ENCODE measurements at regions of chr11 and their contacts with region 1.

Region 1: GRCh38 chr11:8964324-8965320 is at the start of gene TMEM9B:
- DNase-seq: peak; percentile 88
- H3K4me3 ChIP-seq: peak within 1 kb of the TSS; percentile 88
- H3K27ac ChIP-seq: peak within 1 kb of the TSS; percentile 60
- H3K4me1 ChIP-seq: peaks cover 20% of the 10 kb centered on the region
- CTCF ChIP-seq: no peak
- total RNA-seq, gene TMEM9B: 8.5 and 13.4 TPM in 2 replicates

Region 2: GRCh38 chr11:7846003-7846402 is 1118.6 kb before region 1 on chr11:
- CTCF ChIA-PET with region 1: no interaction called
- POLR2A ChIA-PET with region 1: no interaction called
- intact Hi-C with region 1: no loop called
- DNase-seq: no peak
- H3K4me3 ChIP-seq: no peak overlapping the region
- H3K27ac ChIP-seq: no peak overlapping the region
- H3K4me1 ChIP-seq: peaks cover 17% of the 10 kb centered on the region
- CTCF ChIP-seq: no peak

Region 3: GRCh38 chr11:8688414-8689362 is 275.9 kb before region 1 on chr11:
- CTCF ChIA-PET with region 1: no interaction called
- POLR2A ChIA-PET with region 1: interaction called, 4 read pairs
- intact Hi-C with region 1: loop called (anchors 2 kb)
- DNase-seq: peak; percentile 98
- H3K4me3 ChIP-seq: peak overlapping the region; percentile 88
- H3K27ac ChIP-seq: peak overlapping the region; percentile 93
- H3K4me1 ChIP-seq: peaks cover 53% of the 10 kb centered on the region
- CTCF ChIP-seq: peak; percentile 42

Region 4: DNA sequence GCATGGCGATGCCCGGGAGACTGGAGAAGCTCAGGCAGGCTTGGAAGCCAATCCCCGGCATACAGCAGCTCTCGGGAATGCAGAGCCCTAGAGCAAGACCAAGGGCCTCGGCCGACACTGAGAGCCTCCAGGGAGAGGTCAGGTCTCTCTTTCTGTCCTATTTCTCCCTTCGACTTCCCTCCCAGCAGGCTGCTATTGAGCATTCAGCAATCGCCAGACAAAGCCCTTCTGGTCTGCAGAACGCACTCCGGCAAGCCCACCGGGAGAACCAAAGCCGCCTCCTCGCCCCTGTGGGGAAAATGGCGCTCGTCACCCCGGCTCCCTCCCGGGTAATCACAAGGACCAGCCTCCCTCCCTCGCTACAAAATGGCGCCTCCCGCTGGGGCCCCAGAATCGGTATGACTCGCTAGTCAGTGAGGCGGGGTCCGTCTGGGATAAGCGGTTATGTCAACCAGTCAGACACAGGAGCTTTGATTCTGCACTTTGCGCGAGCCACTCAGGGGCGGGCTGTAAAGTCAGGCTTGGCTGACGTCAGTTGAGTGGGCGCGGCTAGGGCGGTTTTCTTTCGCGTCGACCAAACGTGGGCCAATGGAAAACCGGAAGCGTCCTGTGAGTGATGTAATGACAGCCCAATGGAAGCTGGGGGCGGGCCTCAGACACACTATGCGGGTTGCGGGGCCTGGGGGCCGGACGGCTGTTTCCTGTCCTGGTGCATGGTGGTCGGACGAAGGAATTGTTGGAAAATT is 495.9 kb after region 1 on chr11 and contains the start of gene ZNF143:
- CTCF ChIA-PET with region 1: no interaction called
- POLR2A ChIA-PET with region 1: no interaction called
- intact Hi-C with region 1: loop called (anchors 2 kb)
- DNase-seq: peak; percentile 100
- H3K4me3 ChIP-seq: peak within 1 kb of the TSS; percentile 97
- H3K27ac ChIP-seq: peak within 1 kb of the TSS; percentile 97
- H3K4me1 ChIP-seq: peaks cover 28% of the 10 kb centered on the region
- CTCF ChIP-seq: no peak
- total RNA-seq, gene ZNF143: 25.0 and 36.2 TPM in 2 replicates

Measured in OCI-LY7 (cell line).